CD8-positive, alpha-beta T cell (primary cell): ENCODE measurements at regions of chr9 and their contacts with region 1.

Region 1: DNA sequence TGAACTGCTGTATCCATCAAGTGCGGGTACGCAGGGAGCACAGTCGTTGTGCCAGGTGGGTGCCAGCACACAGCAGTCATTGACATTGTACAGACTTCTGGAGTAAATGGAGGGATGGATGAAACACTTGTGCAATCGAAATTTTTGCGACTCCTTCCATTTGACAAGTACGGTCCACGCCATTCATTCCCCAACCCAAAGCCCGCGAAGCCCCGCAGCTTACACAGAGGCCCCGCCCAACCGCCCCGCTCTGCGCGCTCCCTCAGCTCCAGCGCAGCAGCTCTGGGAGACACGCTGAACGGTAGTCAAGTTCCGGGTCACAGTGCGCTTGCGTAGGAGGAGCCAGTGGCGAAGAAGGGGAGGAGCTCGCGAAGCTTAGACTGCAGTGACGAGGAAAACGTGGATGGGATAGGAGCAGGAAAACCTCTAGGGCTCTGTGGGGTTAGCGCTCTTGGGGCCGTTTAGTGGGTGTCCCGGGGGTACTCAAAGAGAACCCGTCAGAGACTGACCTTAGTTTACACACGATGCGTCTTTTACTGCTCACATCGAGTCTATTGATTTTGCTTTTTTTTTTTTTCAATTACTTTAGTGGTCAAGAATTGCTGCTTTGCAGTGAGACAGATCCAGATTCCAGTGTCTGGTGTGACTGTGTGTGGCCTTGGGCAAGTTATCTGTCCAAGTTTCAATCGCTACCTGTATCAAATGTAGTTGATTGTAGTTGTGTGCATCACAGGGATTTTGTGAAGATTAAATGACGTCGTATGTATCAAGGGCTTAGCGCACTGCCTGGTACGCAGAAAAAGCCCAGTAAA is 15.3 kb upstream of the MSANTD3 start:
- DNase-seq: peak; percentile 60 to 94 (median 87)
- ATAC-seq: peak; percentile 100
- H3K4me3 ChIP-seq: peak overlapping the region; percentile 42 to 57
- H3K4me3 Mint-ChIP-seq: peak overlapping the region; percentile 94
- H3K27ac ChIP-seq: peak overlapping the region in 1 of 2 experiments; percentile 25
- H3K27ac Mint-ChIP-seq: peak overlapping the region; percentile 83
- H3K4me1 ChIP-seq: peaks cover 9% of the 10 kb centered on the region
- H3K4me1 Mint-ChIP-seq: peaks cover 13% of the 10 kb centered on the region
- H3K27me3 ChIP-seq: peaks cover 0 to 5% of the 10 kb centered on the region in 2 experiments
- H3K27me3 Mint-ChIP-seq: peaks cover 26% of the 10 kb centered on the region
- CTCF ChIP-seq: no peak

Region 2: GRCh38 chr9:100426530-100427428 is 15.1 kb after region 1 on chr9 and contains the start of gene MSANTD3:
- CTCF ChIA-PET with region 1: interaction called, 4 read pairs
- POLR2A ChIA-PET with region 1: interaction called, 12 read pairs
- intact Hi-C with region 1: loop called in 1 of 2 experiments (anchors 1 kb)
- DNase-seq: peak; percentile 20 to 78 (median 58)
- ATAC-seq: peak; percentile 84
- H3K4me3 ChIP-seq: peak within 1 kb of the TSS; percentile 69 to 74
- H3K4me3 Mint-ChIP-seq: peak within 1 kb of the TSS; percentile 97
- H3K27ac ChIP-seq: peak within 1 kb of the TSS; percentile 31 to 35
- H3K27ac Mint-ChIP-seq: peak within 1 kb of the TSS; percentile 95
- H3K4me1 ChIP-seq: peaks cover 18% of the 10 kb centered on the region
- H3K4me1 Mint-ChIP-seq: peaks cover 35% of the 10 kb centered on the region
- H3K27me3 ChIP-seq: no peaks in the 10 kb centered on the region
- H3K27me3 Mint-ChIP-seq: peaks cover 4% of the 10 kb centered on the region
- CTCF ChIP-seq: no peak
- total RNA-seq, gene MSANTD3: 10.2 to 10.8 TPM

Region 3: GRCh38 chr9:101398068-101398929 is 986.6 kb after region 1 on chr9 and contains the starts of genes MRPL50 and ZNF189:
- CTCF ChIA-PET with region 1: no interaction called
- POLR2A ChIA-PET with region 1: no interaction called
- intact Hi-C with region 1: loop called in 1 of 2 experiments (anchors 10 kb)
- DNase-seq: peak; percentile 89 to 99 (median 95)
- ATAC-seq: peak; percentile 93
- H3K4me3 ChIP-seq: peak within 1 kb of the TSS; percentile 87 to 91
- H3K4me3 Mint-ChIP-seq: peak within 1 kb of the TSS; percentile 97
- H3K27ac ChIP-seq: peak within 1 kb of the TSS; percentile 96 to 98
- H3K27ac Mint-ChIP-seq: peak within 1 kb of the TSS; percentile 99
- H3K4me1 ChIP-seq: peaks cover 54% of the 10 kb centered on the region
- H3K4me1 Mint-ChIP-seq: peaks cover 80% of the 10 kb centered on the region
- H3K27me3 ChIP-seq: no peaks in the 10 kb centered on the region
- H3K27me3 Mint-ChIP-seq: no peaks in the 10 kb centered on the region
- CTCF ChIP-seq: no peak
- total RNA-seq, gene MRPL50: 7.5 to 8.4 TPM
- total RNA-seq, gene ZNF189: 4.0 to 5.2 TPM